ENCODE measurements at regions of chr5 and their contacts with region 1.

Region 1: DNA sequence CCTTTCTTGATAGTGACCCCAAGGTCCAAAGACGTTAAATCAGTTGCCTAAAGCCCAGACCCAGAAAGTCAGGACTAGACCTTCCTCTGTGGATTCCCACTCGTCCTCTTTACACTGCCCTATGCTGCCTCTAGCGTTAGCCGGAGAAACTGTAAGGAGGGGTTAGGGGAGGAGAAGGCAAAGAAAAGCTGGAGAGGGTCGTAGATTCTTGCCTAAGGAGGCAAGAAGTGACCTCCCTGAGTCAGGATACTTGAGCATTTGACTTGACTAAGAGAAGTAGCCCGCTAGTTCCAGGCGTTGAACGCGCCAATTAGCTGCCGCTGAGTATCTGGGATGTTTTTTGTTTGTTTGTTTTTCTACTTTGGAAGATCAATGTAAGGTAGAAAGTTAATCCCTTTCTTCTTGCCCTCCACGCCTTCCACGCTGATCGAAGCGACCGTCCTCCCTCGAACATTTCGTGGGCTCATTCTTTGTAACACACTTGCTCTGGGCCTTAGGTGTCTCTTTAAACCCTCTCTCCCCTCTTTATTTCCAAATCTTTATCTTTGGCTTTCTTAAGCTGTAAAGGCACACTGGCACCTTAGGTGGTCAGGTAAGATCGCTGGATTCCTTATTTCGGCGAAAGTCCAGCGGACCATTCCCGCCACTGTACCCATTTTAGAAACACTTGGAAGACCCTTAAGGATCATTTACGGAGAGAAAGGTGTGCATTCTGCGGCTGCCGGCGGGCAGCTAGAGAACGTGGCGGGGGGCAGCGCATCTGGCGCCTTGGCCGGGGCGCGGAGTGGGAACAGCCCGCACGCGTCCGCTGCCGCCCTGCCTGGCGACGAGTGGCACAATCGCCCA is 5.1 kb upstream of the RGMB start:
- DNase-seq: peak; percentile 43
- H3K4me3 Mint-ChIP-seq: peak overlapping the region; percentile 81
- H3K27ac Mint-ChIP-seq: no peak overlapping the region
- H3K4me1 Mint-ChIP-seq: peaks cover 49% of the 10 kb centered on the region
- H3K27me3 Mint-ChIP-seq: peaks cover 82% of the 10 kb centered on the region

Region 2: GRCh38 chr5:98735806-98736507 is 32.4 kb before region 1 on chr5:
- CTCF ChIA-PET with region 1: interaction called, 15 read pairs
- DNase-seq: no peak
- H3K4me3 Mint-ChIP-seq: no peak overlapping the region
- H3K27ac Mint-ChIP-seq: no peak overlapping the region
- H3K4me1 Mint-ChIP-seq: no peaks in the 10 kb centered on the region
- H3K27me3 Mint-ChIP-seq: peaks cover 4% of the 10 kb centered on the region

Region 3: GRCh38 chr5:98780390-98780789 is 12.0 kb after region 1 on chr5:
- CTCF ChIA-PET with region 1: interaction called, 18 read pairs
- DNase-seq: no peak
- H3K4me3 Mint-ChIP-seq: no peak overlapping the region
- H3K27ac Mint-ChIP-seq: no peak overlapping the region
- H3K4me1 Mint-ChIP-seq: peaks cover 7% of the 10 kb centered on the region
- H3K27me3 Mint-ChIP-seq: peaks cover 9% of the 10 kb centered on the region

Region 4: DNA sequence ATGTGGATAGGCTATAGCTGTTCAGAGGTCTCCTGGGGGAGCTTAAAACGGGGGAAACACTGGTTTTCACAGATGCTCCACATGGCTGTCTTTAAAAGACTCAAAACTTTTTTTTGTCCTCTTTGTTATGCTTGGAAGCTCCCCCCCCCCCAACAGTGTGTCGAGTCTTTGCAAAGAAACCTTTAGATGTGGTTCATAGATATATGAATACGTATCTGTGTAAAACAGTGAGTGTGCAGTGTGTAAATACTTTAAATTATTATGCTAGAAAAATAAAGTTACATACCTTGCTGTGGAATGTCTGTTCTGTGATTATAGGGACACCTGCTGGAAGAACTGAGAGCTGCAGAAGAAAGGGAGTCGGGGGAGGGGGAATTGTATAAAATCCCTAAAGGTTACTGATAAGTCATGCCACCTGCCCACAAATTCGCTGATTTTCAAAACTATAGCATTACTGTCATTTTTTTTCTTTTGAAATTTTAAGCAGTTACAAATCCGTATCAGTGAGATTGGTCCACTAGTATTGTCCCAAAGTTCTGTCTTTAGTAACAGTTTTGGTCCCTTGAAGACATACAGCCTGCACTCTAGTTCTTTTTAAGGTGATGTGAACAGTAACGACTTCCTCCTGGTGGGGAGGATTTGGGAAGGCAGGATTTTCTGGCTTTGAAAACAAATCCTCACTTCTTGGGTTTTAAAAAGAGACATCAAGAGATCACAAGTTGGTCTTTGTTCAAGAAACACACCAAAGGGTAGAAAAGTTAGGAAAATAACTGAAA is 28.0 kb after region 1 on chr5:
- CTCF ChIA-PET with region 1: interaction called, 61 read pairs
- DNase-seq: peak; percentile 55
- H3K4me3 Mint-ChIP-seq: no peak overlapping the region
- H3K27ac Mint-ChIP-seq: no peak overlapping the region
- H3K4me1 Mint-ChIP-seq: no peaks in the 10 kb centered on the region
- H3K27me3 Mint-ChIP-seq: no peaks in the 10 kb centered on the region

Region 5: GRCh38 chr5:99060306-99061261 is 292.2 kb after region 1 on chr5:
- CTCF ChIA-PET with region 1: interaction called, 15 read pairs
- DNase-seq: peak; percentile 90
- H3K4me3 Mint-ChIP-seq: no peak overlapping the region
- H3K27ac Mint-ChIP-seq: no peak overlapping the region
- H3K4me1 Mint-ChIP-seq: peaks cover 4% of the 10 kb centered on the region
- H3K27me3 Mint-ChIP-seq: peaks cover 17% of the 10 kb centered on the region